ENCODE measurements at regions of chr10 and their contacts with region 1.

Region 1: DNA sequence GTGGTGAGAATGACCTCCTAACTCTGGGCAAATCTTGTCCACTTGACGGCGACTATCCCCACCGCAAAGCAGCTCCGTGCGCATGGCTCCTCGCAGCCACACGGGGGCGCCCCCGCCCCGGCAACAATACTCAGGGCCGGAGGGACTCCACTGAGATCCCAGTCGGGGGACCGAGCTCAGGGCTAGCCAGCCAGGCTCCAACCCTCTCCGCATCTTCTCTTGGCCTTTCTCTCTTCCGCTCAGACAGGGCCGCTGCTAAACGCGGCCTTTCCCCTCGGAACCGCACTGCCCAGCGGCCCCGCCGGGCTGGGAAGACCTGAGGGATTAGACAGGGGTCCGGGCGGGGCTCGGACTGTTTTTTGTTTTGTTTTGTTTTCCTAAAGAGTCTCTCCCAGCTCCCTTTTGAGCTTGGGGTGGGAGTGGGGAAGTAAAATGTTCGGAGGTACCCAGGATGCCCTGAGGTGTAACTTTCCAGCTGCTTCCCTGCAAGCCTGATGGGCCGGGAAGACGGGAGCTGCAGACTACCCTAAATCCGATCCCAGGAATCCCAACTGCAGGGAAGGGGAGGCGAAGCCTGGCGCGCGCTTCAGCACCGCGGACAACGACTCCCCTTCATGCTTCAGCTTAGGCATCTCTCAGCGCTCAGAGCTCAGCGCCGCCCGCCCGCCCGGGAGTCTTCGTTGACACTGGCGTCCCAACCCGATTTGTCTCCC is 2.7 kb downstream of the KCNIP2 start:
- DNase-seq: peak; percentile 84
- H3K4me3 Mint-ChIP-seq: peak overlapping the region; percentile 76
- H3K27ac Mint-ChIP-seq: no peak overlapping the region
- H3K4me1 Mint-ChIP-seq: peaks cover 41% of the 10 kb centered on the region
- H3K27me3 Mint-ChIP-seq: peaks cover 14% of the 10 kb centered on the region

Region 2: DNA sequence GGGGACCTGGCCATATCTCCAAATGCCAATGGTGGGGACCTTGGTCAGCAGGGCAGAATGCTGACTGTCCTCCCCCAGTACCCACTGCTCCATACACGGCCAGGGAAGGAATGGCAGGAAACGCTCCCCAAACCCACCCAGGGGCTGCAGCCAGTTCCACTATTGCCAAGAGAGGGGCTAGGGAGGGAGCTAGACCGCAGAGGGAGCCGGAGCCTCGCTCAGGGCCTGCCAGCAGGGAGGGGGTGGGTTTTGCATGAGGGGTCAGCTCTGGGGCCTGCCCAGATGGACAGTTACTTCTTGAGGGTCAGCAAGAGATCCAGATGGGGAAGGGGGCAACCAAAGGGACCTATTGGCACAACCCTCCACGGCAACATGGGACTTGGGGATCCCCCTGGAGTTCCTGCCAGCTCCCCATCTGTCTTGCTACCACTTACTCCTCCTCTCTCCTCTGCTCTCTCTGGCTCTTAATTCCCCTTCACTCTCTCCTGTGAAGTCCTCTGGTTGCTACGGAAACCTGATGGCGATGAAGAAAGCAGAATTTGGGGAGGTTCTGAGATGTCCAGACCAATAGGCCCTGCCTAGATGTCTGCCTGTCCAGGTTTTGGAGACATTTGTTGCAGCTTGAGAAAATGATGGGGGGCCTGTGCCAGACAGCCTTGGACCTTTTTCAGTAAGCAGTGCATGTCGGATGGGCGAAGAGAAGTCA is 77.6 kb before region 1 on chr10:
- CTCF ChIA-PET with region 1: no interaction called
- intact Hi-C with region 1: no loop called
- DNase-seq: no peak
- H3K4me3 Mint-ChIP-seq: no peak overlapping the region
- H3K27ac Mint-ChIP-seq: no peak overlapping the region
- H3K4me1 Mint-ChIP-seq: no peaks in the 10 kb centered on the region
- H3K27me3 Mint-ChIP-seq: peaks cover 4% of the 10 kb centered on the region

Region 3: DNA sequence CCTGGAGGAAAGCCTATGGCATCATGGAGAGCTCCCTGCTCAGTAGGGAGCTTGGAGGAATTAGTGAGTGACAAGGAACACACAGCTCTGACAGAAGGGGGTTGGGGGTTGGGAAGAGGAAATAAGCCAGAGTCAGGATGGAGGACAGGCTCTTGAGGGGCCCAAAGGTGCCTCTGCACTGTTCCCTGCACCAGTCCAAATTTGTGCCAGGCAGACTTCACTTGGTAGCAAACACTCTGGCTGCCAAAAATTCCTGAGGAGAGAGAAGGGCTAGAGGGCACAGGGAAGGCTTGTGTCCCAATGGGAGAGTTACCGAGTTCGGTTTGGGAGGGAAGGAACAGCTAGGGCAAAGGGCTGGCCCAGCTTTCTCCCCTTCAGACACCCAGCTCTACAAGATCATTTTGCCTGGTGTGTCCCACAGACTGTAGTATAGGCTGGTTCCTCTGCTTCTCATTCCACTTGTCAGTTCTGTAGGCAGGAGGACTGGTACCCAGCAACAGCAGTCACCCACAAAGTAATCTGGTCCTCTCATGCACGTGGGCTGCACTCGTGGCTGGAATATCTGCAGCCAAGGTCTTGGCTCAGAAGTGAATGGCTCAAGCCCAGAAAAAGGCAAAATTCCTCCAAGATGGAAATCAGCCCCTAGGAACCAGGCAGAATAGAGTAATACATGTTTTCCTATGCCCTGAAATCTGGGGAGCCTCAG is 10.7 kb after region 1 on chr10:
- CTCF ChIA-PET with region 1: interaction called, 17 read pairs
- intact Hi-C with region 1: no loop called
- DNase-seq: no peak
- H3K4me3 Mint-ChIP-seq: no peak overlapping the region
- H3K27ac Mint-ChIP-seq: no peak overlapping the region
- H3K4me1 Mint-ChIP-seq: no peaks in the 10 kb centered on the region
- H3K27me3 Mint-ChIP-seq: no peaks in the 10 kb centered on the region

Region 4: DNA sequence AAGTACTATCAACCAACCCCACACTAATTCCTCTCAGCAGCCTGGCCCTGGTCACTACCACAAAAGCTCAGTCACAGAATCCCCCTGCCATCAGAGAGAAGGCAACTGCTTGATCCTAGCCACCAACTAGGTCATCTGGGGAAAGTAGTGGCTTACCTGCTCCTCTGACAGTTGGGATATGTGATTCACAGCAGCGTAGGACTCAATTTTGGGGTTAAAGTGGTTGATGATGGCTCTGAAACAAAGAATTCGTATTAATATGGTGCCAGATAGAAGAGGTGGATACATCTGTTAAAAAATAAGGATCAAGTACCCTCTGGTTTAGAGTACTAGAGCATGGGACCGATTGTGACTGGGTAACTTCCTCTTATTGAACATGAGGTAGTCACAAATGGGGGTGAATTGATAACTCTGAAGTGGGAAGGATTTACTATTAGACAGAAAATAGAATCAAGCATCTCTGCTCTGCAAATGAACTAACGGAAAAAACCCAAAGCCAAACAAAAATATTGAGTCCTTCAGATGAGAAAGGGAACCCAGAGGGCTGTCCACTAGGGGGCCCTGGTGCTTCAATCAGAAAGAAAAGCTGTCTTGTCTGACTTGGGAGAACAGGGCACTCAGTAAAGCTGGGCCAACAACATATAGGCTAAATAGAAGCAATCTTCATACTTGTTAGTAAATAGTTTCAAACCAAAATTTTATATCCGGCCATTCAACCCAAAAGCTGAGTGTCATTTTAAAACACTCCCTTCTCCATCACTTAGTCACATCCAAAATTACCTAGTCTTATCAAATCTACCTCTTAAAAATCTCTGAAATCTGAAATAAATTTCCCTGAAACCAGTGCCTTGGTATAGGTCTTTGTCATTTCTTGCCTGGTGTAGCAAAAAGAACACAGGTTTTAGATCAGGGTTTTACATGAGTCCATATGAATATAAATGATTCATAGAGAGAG is 48.6 kb after region 1 on chr10:
- CTCF ChIA-PET with region 1: interaction called, 25 read pairs
- intact Hi-C with region 1: loop called (anchors 1 kb)
- DNase-seq: peak; percentile 90
- H3K4me3 Mint-ChIP-seq: no peak overlapping the region
- H3K27ac Mint-ChIP-seq: no peak overlapping the region
- H3K4me1 Mint-ChIP-seq: peaks cover 5% of the 10 kb centered on the region
- H3K27me3 Mint-ChIP-seq: no peaks in the 10 kb centered on the region

Region 5: GRCh38 chr10:102009801-102010425 is 169.0 kb after region 1 on chr10:
- CTCF ChIA-PET with region 1: interaction called, 97 read pairs
- intact Hi-C with region 1: loop called (anchors 1 kb)
- DNase-seq: peak; percentile 56
- H3K4me3 Mint-ChIP-seq: no peak overlapping the region
- H3K27ac Mint-ChIP-seq: no peak overlapping the region
- H3K4me1 Mint-ChIP-seq: peaks cover 2% of the 10 kb centered on the region
- H3K27me3 Mint-ChIP-seq: no peaks in the 10 kb centered on the region

Region 6: DNA sequence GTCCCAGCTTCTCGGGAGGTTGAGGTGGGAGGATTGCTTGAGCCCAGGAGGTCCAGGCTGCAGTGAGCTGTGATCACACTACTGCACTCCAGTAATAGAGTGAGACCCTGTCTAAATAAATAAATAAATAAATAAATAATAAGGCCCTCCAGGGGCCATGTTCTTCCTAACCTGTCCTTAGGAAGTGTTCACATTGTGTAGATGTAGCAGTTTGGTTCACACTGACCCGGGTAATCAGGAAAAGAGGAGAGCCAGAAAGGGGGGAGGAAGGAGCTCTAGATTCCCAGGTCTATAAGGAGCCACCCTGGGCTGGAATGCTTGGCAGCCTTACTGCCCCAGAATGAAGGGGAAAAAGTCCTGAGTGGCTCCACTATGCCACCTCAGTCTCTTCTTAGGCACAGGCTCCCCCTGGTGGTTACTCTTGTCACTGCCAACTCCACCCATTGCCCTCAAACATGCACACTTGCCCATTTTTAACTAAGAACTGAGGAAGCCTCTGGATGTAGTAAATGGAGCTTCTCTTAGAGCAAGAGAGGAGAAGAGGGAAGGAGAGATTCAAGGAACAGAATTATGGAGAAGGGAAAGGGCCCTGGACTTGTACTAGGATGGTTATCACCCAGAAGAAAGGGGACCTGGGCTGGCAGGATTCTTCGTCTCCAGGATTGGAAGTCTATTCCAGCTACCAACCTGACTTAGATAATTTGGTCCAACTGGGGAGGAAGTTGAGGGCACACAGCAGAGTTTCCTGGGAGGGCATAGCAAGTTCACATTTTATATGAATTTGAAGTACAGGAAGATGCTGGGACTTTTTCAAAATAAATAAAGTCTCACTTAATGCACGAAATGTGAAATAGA is 232.0 kb after region 1 on chr10:
- CTCF ChIA-PET with region 1: interaction called, 45 read pairs
- intact Hi-C with region 1: loop called (anchors 1 kb)
- DNase-seq: peak; percentile 90
- H3K4me3 Mint-ChIP-seq: no peak overlapping the region
- H3K27ac Mint-ChIP-seq: no peak overlapping the region
- H3K4me1 Mint-ChIP-seq: no peaks in the 10 kb centered on the region
- H3K27me3 Mint-ChIP-seq: no peaks in the 10 kb centered on the region

Region 7: GRCh38 chr10:102132563-102133372 is 291.9 kb after region 1 on chr10 and contains the start of gene PPRC1:
- CTCF ChIA-PET with region 1: interaction called, 3 read pairs
- intact Hi-C with region 1: loop called (anchors 5 kb)
- DNase-seq: peak; percentile 99
- H3K4me3 Mint-ChIP-seq: peak within 1 kb of the TSS; percentile 97
- H3K27ac Mint-ChIP-seq: peak within 1 kb of the TSS; percentile 96
- H3K4me1 Mint-ChIP-seq: peaks cover 42% of the 10 kb centered on the region
- H3K27me3 Mint-ChIP-seq: no peaks in the 10 kb centered on the region
- total RNA-seq, gene PPRC1: 54.6 to 55.0 TPM